ENCODE measurements at regions of chr1 and their contacts with region 1.

Region 1: GRCh38 chr1:36223993-36224536 is at the start of gene THRAP3:
- DNase-seq: peak; percentile 100
- H3K4me3 ChIP-seq: peak within 1 kb of the TSS; percentile 77 to 97
- H3K4me3 Mint-ChIP-seq: peak within 1 kb of the TSS; percentile 95 to 99 (median 98)
- H3K27ac ChIP-seq: peak within 1 kb of the TSS; percentile 98
- H3K27ac Mint-ChIP-seq: peak within 1 kb of the TSS; percentile 97 to 100 (median 100)
- H3K4me1 ChIP-seq: peaks cover 45% of the 10 kb centered on the region
- H3K4me1 Mint-ChIP-seq: peaks cover 19 to 46% (median 29%) of the 10 kb centered on the region in 4 donors
- H3K27me3 ChIP-seq: no peaks in the 10 kb centered on the region
- H3K27me3 Mint-ChIP-seq: no peaks in the 10 kb centered on the region
- total RNA-seq, gene THRAP3: 127 to 130 TPM

Region 2: DNA sequence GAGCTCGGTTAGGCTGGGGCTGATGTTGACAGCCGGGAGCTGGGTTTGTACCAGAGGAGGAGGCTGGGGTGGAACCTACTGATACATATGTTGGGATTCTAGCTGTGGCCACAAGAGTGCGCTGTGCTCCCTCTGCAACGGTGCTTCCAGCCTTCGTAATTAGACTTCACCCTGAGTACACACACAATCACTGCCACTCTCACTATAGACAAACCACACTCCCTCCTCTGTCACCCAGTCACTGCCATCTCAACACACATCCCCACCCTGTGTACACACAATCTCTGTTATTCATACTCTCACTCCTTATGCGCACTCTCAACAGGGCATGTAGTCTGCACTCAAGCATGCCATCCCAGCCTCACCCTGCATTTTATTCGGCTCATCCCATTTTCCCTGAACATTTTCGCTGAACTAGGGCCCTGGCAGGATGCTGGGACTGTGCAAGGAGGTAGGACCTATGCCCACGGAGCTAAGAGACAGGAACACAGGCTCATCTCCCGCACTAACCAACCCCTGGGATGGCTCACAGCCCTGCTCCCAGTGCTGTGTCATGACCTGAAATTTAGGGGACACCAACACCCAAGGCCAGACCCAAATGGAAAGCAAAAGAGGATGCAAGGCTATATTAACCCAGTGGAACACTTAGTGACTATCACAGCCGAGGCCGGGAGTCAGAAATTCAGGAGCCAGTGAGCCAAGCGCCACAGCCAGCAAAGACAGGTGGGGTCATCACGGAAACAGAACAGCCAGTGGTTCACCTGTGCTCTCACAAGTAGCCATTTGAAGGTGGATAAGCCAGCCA is 1437.3 kb before region 1 on chr1:
- CTCF ChIA-PET with region 1: no interaction called
- POLR2A ChIA-PET with region 1: no interaction called
- intact Hi-C with region 1: no loop called
- DNase-seq: peak; percentile 41 to 58 (median 45)
- H3K4me3 ChIP-seq: no peak overlapping the region
- H3K4me3 Mint-ChIP-seq: no peak overlapping the region
- H3K27ac ChIP-seq: no peak overlapping the region
- H3K27ac Mint-ChIP-seq: peak overlapping the region in 2 of 7 donors; percentile 1 to 34
- H3K4me1 ChIP-seq: peaks cover 3% of the 10 kb centered on the region
- H3K4me1 Mint-ChIP-seq: peaks cover 0 to 6% (median 3%) of the 10 kb centered on the region in 4 donors
- H3K27me3 ChIP-seq: peaks cover 6% of the 10 kb centered on the region
- H3K27me3 Mint-ChIP-seq: peaks cover 14 to 52% of the 10 kb centered on the region in 2 donors

Region 3: GRCh38 chr1:36088575-36089443 is 135.3 kb before region 1 on chr1 and contains the start of gene ADPRS:
- CTCF ChIA-PET with region 1: no interaction called
- POLR2A ChIA-PET with region 1: interaction called, 3 read pairs
- intact Hi-C with region 1: loop called (anchors 1 kb)
- DNase-seq: peak; percentile 88 to 91 (median 89)
- H3K4me3 ChIP-seq: peak within 1 kb of the TSS; percentile 29 to 87
- H3K4me3 Mint-ChIP-seq: peak within 1 kb of the TSS; percentile 87 to 98 (median 92)
- H3K27ac ChIP-seq: peak within 1 kb of the TSS; percentile 92
- H3K27ac Mint-ChIP-seq: peak within 1 kb of the TSS; percentile 88 to 99 (median 96)
- H3K4me1 ChIP-seq: peaks cover 18% of the 10 kb centered on the region
- H3K4me1 Mint-ChIP-seq: peaks cover 11 to 38% (median 15%) of the 10 kb centered on the region in 4 donors
- H3K27me3 ChIP-seq: no peaks in the 10 kb centered on the region
- H3K27me3 Mint-ChIP-seq: peaks cover 6 to 14% of the 10 kb centered on the region in 2 donors
- total RNA-seq, gene ADPRS: 26.7 to 28.6 TPM

Region 4: GRCh38 chr1:36155408-36156328 is 68.4 kb before region 1 on chr1 and contains the start of gene MAP7D1:
- CTCF ChIA-PET with region 1: interaction called, 43 read pairs
- POLR2A ChIA-PET with region 1: interaction called, 83 read pairs
- intact Hi-C with region 1: no loop called
- DNase-seq: peak; percentile 88 to 94 (median 89)
- H3K4me3 ChIP-seq: peak within 1 kb of the TSS; percentile 91 to 97
- H3K4me3 Mint-ChIP-seq: peak within 1 kb of the TSS; percentile 85 to 97 (median 92)
- H3K27ac ChIP-seq: peak within 1 kb of the TSS; percentile 96
- H3K27ac Mint-ChIP-seq: peak within 1 kb of the TSS; percentile 91 to 98 (median 94)
- H3K4me1 ChIP-seq: peaks cover 75% of the 10 kb centered on the region
- H3K4me1 Mint-ChIP-seq: peaks cover 47 to 86% (median 65%) of the 10 kb centered on the region in 4 donors
- H3K27me3 ChIP-seq: no peaks in the 10 kb centered on the region
- H3K27me3 Mint-ChIP-seq: no peaks in the 10 kb centered on the region
- total RNA-seq, gene MAP7D1: 221 to 222 TPM

Region 5: GRCh38 chr1:36160949-36161485 is 63.0 kb before region 1 on chr1:
- CTCF ChIA-PET with region 1: interaction called, 5 read pairs
- POLR2A ChIA-PET with region 1: interaction called, 68 read pairs
- intact Hi-C with region 1: no loop called
- DNase-seq: peak; percentile 57 to 72 (median 67)
- H3K4me3 ChIP-seq: peak overlapping the region; percentile 53 to 62
- H3K4me3 Mint-ChIP-seq: peak overlapping the region; percentile 80 to 91 (median 86)
- H3K27ac ChIP-seq: peak overlapping the region; percentile 78
- H3K27ac Mint-ChIP-seq: peak overlapping the region; percentile 93 to 99 (median 98)
- H3K4me1 ChIP-seq: peaks cover 75% of the 10 kb centered on the region
- H3K4me1 Mint-ChIP-seq: peaks cover 53 to 83% (median 66%) of the 10 kb centered on the region in 4 donors
- H3K27me3 ChIP-seq: no peaks in the 10 kb centered on the region
- H3K27me3 Mint-ChIP-seq: no peaks in the 10 kb centered on the region

Region 6: DNA sequence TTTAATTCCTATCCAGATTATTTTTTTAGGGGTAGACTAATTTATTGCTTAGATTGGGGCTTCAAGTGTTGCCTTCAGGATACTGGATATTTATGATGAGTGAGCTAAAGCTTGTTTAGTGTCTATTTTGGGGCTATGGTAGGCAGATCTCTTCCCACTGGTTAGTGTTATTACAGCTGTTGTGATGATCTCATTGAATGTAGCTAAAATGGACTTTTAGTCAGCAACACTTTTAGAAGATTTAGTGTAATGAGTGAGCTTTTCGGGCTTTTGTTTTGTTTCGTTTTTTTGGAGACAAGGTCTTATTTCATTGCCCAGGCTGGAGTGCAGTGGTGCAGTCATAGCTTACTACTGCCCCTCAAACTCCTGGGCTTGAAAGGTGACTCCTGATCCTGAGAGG is 14.4 kb after region 1 on chr1:
- CTCF ChIA-PET with region 1: interaction called, 3 read pairs
- POLR2A ChIA-PET with region 1: interaction called, 25 read pairs
- intact Hi-C with region 1: no loop called
- DNase-seq: no peak
- H3K4me3 ChIP-seq: no peak overlapping the region
- H3K4me3 Mint-ChIP-seq: peak overlapping the region in 1 of 8 donors; percentile 30
- H3K27ac ChIP-seq: no peak overlapping the region
- H3K27ac Mint-ChIP-seq: peak overlapping the region in 5 of 7 donors; percentile 0 to 59 (median 35)
- H3K4me1 ChIP-seq: peaks cover 65% of the 10 kb centered on the region
- H3K4me1 Mint-ChIP-seq: peaks cover 29 to 53% (median 40%) of the 10 kb centered on the region in 4 donors
- H3K27me3 ChIP-seq: no peaks in the 10 kb centered on the region
- H3K27me3 Mint-ChIP-seq: no peaks in the 10 kb centered on the region

Region 7: GRCh38 chr1:36285448-36286101 is 61.5 kb after region 1 on chr1:
- CTCF ChIA-PET with region 1: interaction called, 9 read pairs
- POLR2A ChIA-PET with region 1: interaction called, 4 read pairs
- intact Hi-C with region 1: loop called (anchors 1 kb)
- DNase-seq: peak; percentile 72 to 81 (median 75)
- H3K4me3 ChIP-seq: no peak overlapping the region
- H3K4me3 Mint-ChIP-seq: peak overlapping the region in 5 of 8 donors; percentile 5 to 41 (median 13)
- H3K27ac ChIP-seq: no peak overlapping the region
- H3K27ac Mint-ChIP-seq: peak overlapping the region; percentile 24 to 89 (median 76)
- H3K4me1 ChIP-seq: peaks cover 13% of the 10 kb centered on the region
- H3K4me1 Mint-ChIP-seq: peaks cover 8 to 29% (median 15%) of the 10 kb centered on the region in 4 donors
- H3K27me3 ChIP-seq: no peaks in the 10 kb centered on the region
- H3K27me3 Mint-ChIP-seq: no peaks in the 10 kb centered on the region

Region 8: GRCh38 chr1:36306902-36307456 is 82.9 kb after region 1 on chr1:
- CTCF ChIA-PET with region 1: no interaction called
- POLR2A ChIA-PET with region 1: interaction called, 22 read pairs
- intact Hi-C with region 1: no loop called
- DNase-seq: peak; percentile 90 to 94 (median 92)
- H3K4me3 ChIP-seq: peak overlapping the region; percentile 77 to 81
- H3K4me3 Mint-ChIP-seq: peak overlapping the region; percentile 91 to 99 (median 94)
- H3K27ac ChIP-seq: peak overlapping the region; percentile 73
- H3K27ac Mint-ChIP-seq: peak overlapping the region; percentile 74 to 96 (median 92)
- H3K4me1 ChIP-seq: peaks cover 23% of the 10 kb centered on the region
- H3K4me1 Mint-ChIP-seq: peaks cover 5 to 21% (median 11%) of the 10 kb centered on the region in 4 donors
- H3K27me3 ChIP-seq: no peaks in the 10 kb centered on the region
- H3K27me3 Mint-ChIP-seq: no peaks in the 10 kb centered on the region